ENCODE measurements at regions of chr5 and their contacts with region 1.

Region 1: GRCh38 chr5:119411935-119412602 is 40.2 kb upstream of the HSD17B4 start:
- DNase-seq: peak; percentile 71
- H3K4me3 ChIP-seq: peak overlapping the region; percentile 49 to 62 (median 54)
- H3K27ac ChIP-seq: peak overlapping the region; percentile 97
- H3K4me1 ChIP-seq: peaks cover 12% of the 10 kb centered on the region
- H3K27me3 ChIP-seq: no peaks in the 10 kb centered on the region
- CTCF ChIP-seq: peak; percentile 71 to 97

Region 2: DNA sequence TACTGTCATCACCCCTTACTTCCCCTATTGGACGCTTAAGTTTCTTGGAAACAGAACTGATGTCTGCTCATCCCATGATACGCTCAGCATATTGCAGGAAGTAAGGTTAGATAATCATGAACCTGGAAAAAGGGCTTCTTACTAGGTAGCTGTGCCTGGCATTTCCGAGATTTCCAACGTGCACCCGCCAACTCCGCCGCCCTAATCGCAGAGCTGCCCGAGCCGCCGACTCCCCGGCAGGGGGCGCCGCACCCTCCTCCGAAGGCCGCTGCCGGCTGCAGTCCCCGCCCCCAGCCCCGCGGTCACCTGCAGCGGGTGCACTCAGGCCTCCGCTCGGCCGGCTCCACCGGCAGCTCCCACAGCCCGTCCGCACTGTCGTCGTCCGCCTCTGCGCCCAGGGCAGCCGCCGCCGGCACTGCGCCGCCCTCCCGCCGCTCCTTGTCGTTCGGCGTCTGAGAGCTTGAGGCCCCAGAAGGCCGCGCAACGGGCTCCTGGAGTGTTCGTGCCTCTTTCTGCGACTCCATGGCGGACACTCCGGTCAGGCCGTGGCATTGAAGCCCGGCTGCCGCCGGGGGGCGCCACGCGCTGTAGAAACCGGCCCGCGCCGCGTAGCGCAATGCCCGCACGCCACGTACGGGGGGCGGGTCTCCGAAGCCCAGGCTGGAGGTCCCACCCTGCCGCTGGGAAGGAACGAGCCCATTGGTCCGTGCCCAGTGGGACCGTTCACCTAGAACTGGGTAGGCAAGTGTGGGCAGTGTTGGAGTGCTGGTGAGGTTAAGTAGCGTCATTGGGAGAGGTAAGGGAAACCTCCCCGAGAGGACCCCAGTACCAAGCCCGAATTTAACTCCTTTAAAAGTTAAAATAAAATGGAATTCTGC is 423.8 kb before region 1 on chr5 and contains the start of gene DTWD2:
- CTCF ChIA-PET with region 1: interaction called, 4 read pairs
- dilution Hi-C with region 1: no loop called
- in situ Hi-C with region 1: no loop called
- intact Hi-C with region 1: loop called (anchors 1 kb)
- DNase-seq: peak; percentile 94
- H3K4me3 ChIP-seq: peak within 1 kb of the TSS; percentile 62 to 71 (median 70)
- H3K27ac ChIP-seq: peak within 1 kb of the TSS; percentile 65
- H3K4me1 ChIP-seq: peaks cover 8% of the 10 kb centered on the region
- H3K27me3 ChIP-seq: no peaks in the 10 kb centered on the region
- CTCF ChIP-seq: peak; percentile 74 to 90
- total RNA-seq, gene DTWD2: 6.1 to 9.5 TPM

Region 3: GRCh38 chr5:119031905-119032304 is 380.2 kb before region 1 on chr5:
- CTCF ChIA-PET with region 1: no interaction called
- dilution Hi-C with region 1: loop called (anchors 25 kb)
- in situ Hi-C with region 1: loop called (anchors 10 to 25 kb)
- intact Hi-C with region 1: no loop called
- DNase-seq: peak; percentile 6
- H3K4me3 ChIP-seq: no peak overlapping the region
- H3K27ac ChIP-seq: no peak overlapping the region
- H3K4me1 ChIP-seq: peaks cover 5% of the 10 kb centered on the region
- H3K27me3 ChIP-seq: no peaks in the 10 kb centered on the region
- CTCF ChIP-seq: no peak

Region 4: GRCh38 chr5:119267958-119268386 is 144.1 kb before region 1 on chr5:
- CTCF ChIA-PET with region 1: no interaction called
- dilution Hi-C with region 1: no loop called
- in situ Hi-C with region 1: loop called in 1 of 2 experiments (anchors 10 kb)
- intact Hi-C with region 1: loop called (anchors 1 kb)
- DNase-seq: peak; percentile 82
- H3K4me3 ChIP-seq: peak overlapping the region; percentile 60 to 83 (median 73)
- H3K27ac ChIP-seq: peak overlapping the region; percentile 76
- H3K4me1 ChIP-seq: peaks cover 13% of the 10 kb centered on the region
- H3K27me3 ChIP-seq: no peaks in the 10 kb centered on the region
- CTCF ChIP-seq: peak; percentile 22 to 34

Region 5: DNA sequence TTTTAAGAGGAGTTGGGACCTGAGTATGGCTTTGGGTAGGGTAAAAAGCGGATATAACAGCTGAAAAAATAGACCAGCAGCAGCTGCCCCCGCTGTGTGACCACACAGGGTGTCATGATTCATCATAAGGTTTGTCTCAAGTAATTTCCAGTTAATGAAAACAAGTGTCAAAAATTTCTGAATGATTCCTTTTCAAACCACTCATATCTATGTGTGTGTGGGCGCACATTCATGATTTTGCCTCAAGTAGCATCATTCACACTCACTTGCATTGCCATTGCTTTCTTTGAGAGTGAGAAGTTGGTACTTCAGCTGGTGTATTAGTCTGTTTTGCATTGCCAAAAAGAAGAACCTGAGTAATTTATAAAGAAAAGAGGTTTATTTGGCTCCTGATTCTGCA is 68.3 kb before region 1 on chr5:
- CTCF ChIA-PET with region 1: interaction called, 10 read pairs
- dilution Hi-C with region 1: no loop called
- in situ Hi-C with region 1: loop called in 1 of 2 experiments (anchors 10 kb)
- intact Hi-C with region 1: no loop called
- DNase-seq: no peak
- H3K4me3 ChIP-seq: no peak overlapping the region
- H3K27ac ChIP-seq: no peak overlapping the region
- H3K4me1 ChIP-seq: no peaks in the 10 kb centered on the region
- H3K27me3 ChIP-seq: no peaks in the 10 kb centered on the region
- CTCF ChIP-seq: no peak

Region 6: DNA sequence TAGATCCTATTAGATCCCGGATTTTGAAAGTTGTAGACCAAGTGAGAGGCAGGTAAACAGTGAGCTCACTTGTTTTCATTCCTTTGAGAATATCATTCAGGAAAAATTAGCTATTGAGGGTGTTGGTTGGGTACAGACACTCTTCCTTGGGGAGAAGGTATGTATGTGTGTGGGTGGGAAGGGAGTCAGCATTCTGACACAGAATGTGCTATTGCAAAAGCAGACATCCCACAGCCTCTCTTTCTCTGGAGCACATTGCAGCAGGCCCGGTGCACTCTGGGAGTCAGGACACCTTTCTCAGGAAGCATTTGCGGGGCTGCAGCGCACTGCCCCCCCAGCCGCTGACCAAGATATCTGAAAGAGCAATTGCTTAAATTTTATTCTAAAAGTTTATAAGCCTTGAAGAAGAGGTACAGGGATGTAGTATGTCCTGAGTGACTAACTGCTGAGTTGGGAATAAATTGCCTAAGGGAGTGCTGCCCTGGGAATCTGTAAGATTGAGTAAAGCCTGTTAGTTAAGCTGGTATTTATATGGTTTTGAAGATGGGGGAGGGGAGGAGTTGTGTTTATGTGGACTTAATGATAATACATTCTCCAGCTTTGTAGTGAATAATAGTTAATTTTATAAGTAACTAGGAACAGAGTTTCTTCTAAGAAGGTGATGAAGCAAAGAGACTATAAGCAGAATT is 51.0 kb before region 1 on chr5:
- CTCF ChIA-PET with region 1: interaction called, 12 read pairs
- dilution Hi-C with region 1: loop called (anchors 5 kb)
- in situ Hi-C with region 1: no loop called
- intact Hi-C with region 1: loop called (anchors 1 kb)
- DNase-seq: peak; percentile 91
- H3K4me3 ChIP-seq: peak overlapping the region in 1 of 3 experiments; percentile 2
- H3K27ac ChIP-seq: peak overlapping the region; percentile 81
- H3K4me1 ChIP-seq: peaks cover 74% of the 10 kb centered on the region
- H3K27me3 ChIP-seq: no peaks in the 10 kb centered on the region
- CTCF ChIP-seq: no peak

Region 7: DNA sequence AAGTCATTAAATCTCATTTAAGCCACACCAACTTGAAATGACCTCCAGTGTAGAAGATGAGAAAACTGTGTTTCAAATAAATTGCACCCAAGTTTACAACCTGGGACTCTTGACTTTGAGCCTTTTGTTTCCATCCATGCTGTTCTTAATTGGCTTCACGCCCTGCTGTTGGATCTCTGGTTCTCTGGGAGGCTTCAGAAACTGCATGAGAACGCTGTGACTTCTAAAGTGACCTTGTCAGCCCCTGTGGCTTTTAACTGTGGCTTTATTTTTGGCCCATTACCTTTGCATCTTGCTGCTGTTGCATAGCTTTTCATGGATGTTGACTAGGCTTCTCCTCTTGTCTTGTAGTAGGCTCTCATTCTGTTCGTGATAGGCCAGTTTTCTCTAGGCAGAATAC is 26.9 kb before region 1 on chr5:
- CTCF ChIA-PET with region 1: no interaction called
- dilution Hi-C with region 1: no loop called
- in situ Hi-C with region 1: no loop called
- intact Hi-C with region 1: no loop called
- DNase-seq: no peak
- H3K4me3 ChIP-seq: no peak overlapping the region
- H3K27ac ChIP-seq: no peak overlapping the region
- H3K4me1 ChIP-seq: peaks cover 12% of the 10 kb centered on the region
- H3K27me3 ChIP-seq: no peaks in the 10 kb centered on the region
- CTCF ChIP-seq: no peak

Region 8: GRCh38 chr5:119666542-119666941 is 254.5 kb after region 1 on chr5:
- CTCF ChIA-PET with region 1: no interaction called
- dilution Hi-C with region 1: no loop called
- in situ Hi-C with region 1: no loop called
- intact Hi-C with region 1: no loop called
- DNase-seq: no peak
- H3K4me3 ChIP-seq: no peak overlapping the region
- H3K27ac ChIP-seq: no peak overlapping the region
- H3K4me1 ChIP-seq: no peaks in the 10 kb centered on the region
- H3K27me3 ChIP-seq: no peaks in the 10 kb centered on the region
- CTCF ChIP-seq: no peak